SK-N-SH (cell line): ENCODE measurements at regions of chr11 and their contacts with region 1.

Region 1: GRCh38 chr11:120229451-120230424 is 10.2 kb upstream of the POU2F3 start:
- DNase-seq: peak; percentile 66
- H3K4me3 ChIP-seq: no peak overlapping the region; a peak in 1 of 4 replicates
- H3K27ac ChIP-seq: no peak overlapping the region
- H3K4me1 ChIP-seq: no peaks in the 10 kb centered on the region; a peak in 1 of 4 replicates
- H3K27me3 ChIP-seq: no peaks in the 10 kb centered on the region; the same call in 1 of the 2 replicates
- CTCF ChIP-seq: peak; percentile 78
- EP300 ChIP-seq: no peak
- RAD21 ChIP-seq: peak; percentile 84

Region 2: DNA sequence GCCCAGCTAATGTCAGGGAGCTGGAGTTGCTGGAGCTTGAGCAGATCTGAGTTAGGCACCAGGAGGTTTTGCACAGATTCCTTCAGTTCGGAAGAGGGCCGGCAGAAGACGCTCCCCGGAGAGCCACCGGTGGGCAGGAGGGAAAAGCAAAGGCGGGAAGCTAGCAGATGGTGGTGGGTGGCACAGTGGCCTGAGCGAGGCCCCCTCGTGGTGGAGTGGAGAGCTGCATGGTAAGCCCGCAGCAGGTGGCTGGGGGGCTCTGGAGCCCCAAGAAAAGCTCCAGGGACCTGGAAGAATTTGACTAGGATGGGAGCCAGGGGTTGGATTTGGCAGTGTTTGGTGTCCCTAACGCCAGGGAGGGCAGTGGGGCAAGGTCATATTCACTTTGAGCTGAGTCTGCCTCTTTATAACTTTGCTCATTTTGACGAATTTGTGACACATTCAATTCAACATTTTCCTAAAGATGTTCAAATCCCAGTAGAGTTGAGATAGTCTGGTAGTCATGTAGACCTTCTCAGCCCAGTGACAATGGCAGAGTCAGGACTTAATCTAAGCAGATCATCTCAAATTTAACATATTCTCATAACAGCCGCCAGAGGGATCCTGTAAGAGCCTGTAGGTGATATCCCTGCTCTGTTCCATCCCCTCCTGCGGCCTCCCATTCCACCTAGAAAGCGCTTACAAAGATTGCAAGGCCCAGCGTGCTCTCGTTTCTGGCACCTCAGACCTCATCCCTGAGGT is 149.8 kb before region 1 on chr11:
- CTCF ChIA-PET with region 1: no interaction called
- POLR2A ChIA-PET with region 1: no interaction called
- DNase-seq: no peak
- H3K4me3 ChIP-seq: no peak overlapping the region
- H3K27ac ChIP-seq: no peak overlapping the region
- H3K4me1 ChIP-seq: no peaks in the 10 kb centered on the region
- H3K27me3 ChIP-seq: no peaks in the 10 kb centered on the region
- CTCF ChIP-seq: peak; percentile 49
- EP300 ChIP-seq: no peak
- RAD21 ChIP-seq: no peak

Region 3: GRCh38 chr11:120182790-120183491 is 46.8 kb before region 1 on chr11:
- CTCF ChIA-PET with region 1: interaction called, 68 read pairs
- POLR2A ChIA-PET with region 1: interaction called, 3 read pairs
- DNase-seq: no peak
- H3K4me3 ChIP-seq: no peak overlapping the region
- H3K27ac ChIP-seq: no peak overlapping the region
- H3K4me1 ChIP-seq: peaks cover 5 to 51% of the 10 kb centered on the region in 2 experiments; a peak in 2 of 4 replicates
- H3K27me3 ChIP-seq: no peaks in the 10 kb centered on the region
- CTCF ChIP-seq: peak; percentile 42
- EP300 ChIP-seq: no peak
- RAD21 ChIP-seq: peak; percentile 42

Region 4: DNA sequence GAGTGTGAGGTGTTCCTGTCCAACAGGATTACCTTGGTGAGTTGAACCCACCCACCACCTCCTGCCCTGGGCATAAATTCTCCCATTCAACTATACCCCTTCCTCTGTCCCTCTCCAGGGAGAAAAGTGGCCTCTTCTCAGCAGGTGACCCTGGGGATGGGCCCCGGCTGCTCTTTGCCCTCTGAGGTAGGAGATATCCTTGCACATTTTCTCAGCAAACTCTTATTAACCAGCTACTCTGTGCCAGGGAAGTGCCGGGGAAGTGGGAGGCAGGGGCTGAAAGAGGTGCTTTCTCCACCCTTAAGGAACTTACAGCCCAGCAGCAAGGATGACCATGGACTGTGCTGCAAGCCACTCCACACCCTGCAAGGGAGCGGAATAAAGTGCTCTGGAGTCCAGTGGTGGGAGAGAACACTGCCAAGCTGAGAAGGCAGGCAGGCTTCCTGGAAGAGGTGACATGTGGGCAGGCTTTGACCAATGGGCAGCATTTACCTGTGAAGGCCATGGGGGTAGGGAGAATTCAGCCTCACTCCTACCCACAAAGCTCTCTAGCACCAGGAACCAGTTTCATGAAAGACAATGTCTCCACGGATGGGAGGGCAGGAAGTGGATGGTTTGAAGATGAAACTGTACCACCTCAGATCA is 40.8 kb before region 1 on chr11:
- CTCF ChIA-PET with region 1: interaction called, 68 read pairs
- POLR2A ChIA-PET with region 1: no interaction called
- DNase-seq: no peak
- H3K4me3 ChIP-seq: no peak overlapping the region
- H3K27ac ChIP-seq: no peak overlapping the region; a peak in 1 of 4 replicates
- H3K4me1 ChIP-seq: peaks cover 0 to 58% of the 10 kb centered on the region in 2 experiments; a peak in 2 of 4 replicates
- H3K27me3 ChIP-seq: peaks cover 15% of the 10 kb centered on the region; the same call in 1 of the 2 replicates
- CTCF ChIP-seq: no peak
- EP300 ChIP-seq: no peak
- RAD21 ChIP-seq: no peak

Region 5: GRCh38 chr11:120210626-120211521 is 18.9 kb before region 1 on chr11 and contains the start of gene OAF:
- CTCF ChIA-PET with region 1: interaction called, 111 read pairs
- POLR2A ChIA-PET with region 1: no interaction called
- DNase-seq: peak; percentile 90
- H3K4me3 ChIP-seq: peak within 1 kb of the TSS; percentile 68 to 69
- H3K27ac ChIP-seq: peak within 1 kb of the TSS in 1 of 2 experiments; percentile 40; a peak in 1 of 4 replicates
- H3K4me1 ChIP-seq: peaks cover 16 to 33% of the 10 kb centered on the region in 2 experiments; a peak in 3 of 4 replicates
- H3K27me3 ChIP-seq: no peaks in the 10 kb centered on the region
- CTCF ChIP-seq: peak; percentile 28; the same call in 1 of the 2 replicates
- EP300 ChIP-seq: no peak
- RAD21 ChIP-seq: no peak
- polyA plus RNA-seq, gene OAF: 27.6 and 28.0 TPM in 2 replicates

Region 6: GRCh38 chr11:120248551-120249278 is 19.0 kb after region 1 on chr11:
- CTCF ChIA-PET with region 1: interaction called, 19 read pairs
- POLR2A ChIA-PET with region 1: no interaction called
- DNase-seq: no peak
- H3K4me3 ChIP-seq: no peak overlapping the region
- H3K27ac ChIP-seq: no peak overlapping the region; a peak in 1 of 4 replicates
- H3K4me1 ChIP-seq: peaks cover 6 to 12% of the 10 kb centered on the region in 2 experiments; a peak in 3 of 4 replicates
- H3K27me3 ChIP-seq: peaks cover 5% of the 10 kb centered on the region; the same call in 1 of the 2 replicates
- CTCF ChIP-seq: no peak
- EP300 ChIP-seq: no peak
- RAD21 ChIP-seq: no peak